ENCODE measurements at regions of chr3 and their contacts with region 1.

Region 1: GRCh38 chr3:179322286-179323196 is at the start of gene ZNF639:
- DNase-seq: peak; percentile 78
- H3K4me3 Mint-ChIP-seq: peak within 1 kb of the TSS; percentile 90
- H3K27ac Mint-ChIP-seq: peak within 1 kb of the TSS; percentile 92
- H3K4me1 Mint-ChIP-seq: peaks cover 32% of the 10 kb centered on the region
- H3K27me3 Mint-ChIP-seq: peaks cover 16% of the 10 kb centered on the region
- total RNA-seq, gene ZNF639: 36.2 and 37.0 TPM in 2 replicates

Region 2: GRCh38 chr3:178436773-178437172 is 885.8 kb before region 1 on chr3:
- intact Hi-C with region 1: loop called (anchors 5 kb)
- DNase-seq: no peak
- H3K4me3 Mint-ChIP-seq: no peak overlapping the region
- H3K27ac Mint-ChIP-seq: no peak overlapping the region
- H3K4me1 Mint-ChIP-seq: no peaks in the 10 kb centered on the region
- H3K27me3 Mint-ChIP-seq: no peaks in the 10 kb centered on the region

Region 3: GRCh38 chr3:179260949-179261765 is 61.4 kb before region 1 on chr3:
- intact Hi-C with region 1: loop called (anchors 5 kb)
- DNase-seq: peak; percentile 66
- H3K4me3 Mint-ChIP-seq: peak overlapping the region; percentile 76
- H3K27ac Mint-ChIP-seq: no peak overlapping the region
- H3K4me1 Mint-ChIP-seq: peaks cover 13% of the 10 kb centered on the region
- H3K27me3 Mint-ChIP-seq: peaks cover 22% of the 10 kb centered on the region

Region 4: DNA sequence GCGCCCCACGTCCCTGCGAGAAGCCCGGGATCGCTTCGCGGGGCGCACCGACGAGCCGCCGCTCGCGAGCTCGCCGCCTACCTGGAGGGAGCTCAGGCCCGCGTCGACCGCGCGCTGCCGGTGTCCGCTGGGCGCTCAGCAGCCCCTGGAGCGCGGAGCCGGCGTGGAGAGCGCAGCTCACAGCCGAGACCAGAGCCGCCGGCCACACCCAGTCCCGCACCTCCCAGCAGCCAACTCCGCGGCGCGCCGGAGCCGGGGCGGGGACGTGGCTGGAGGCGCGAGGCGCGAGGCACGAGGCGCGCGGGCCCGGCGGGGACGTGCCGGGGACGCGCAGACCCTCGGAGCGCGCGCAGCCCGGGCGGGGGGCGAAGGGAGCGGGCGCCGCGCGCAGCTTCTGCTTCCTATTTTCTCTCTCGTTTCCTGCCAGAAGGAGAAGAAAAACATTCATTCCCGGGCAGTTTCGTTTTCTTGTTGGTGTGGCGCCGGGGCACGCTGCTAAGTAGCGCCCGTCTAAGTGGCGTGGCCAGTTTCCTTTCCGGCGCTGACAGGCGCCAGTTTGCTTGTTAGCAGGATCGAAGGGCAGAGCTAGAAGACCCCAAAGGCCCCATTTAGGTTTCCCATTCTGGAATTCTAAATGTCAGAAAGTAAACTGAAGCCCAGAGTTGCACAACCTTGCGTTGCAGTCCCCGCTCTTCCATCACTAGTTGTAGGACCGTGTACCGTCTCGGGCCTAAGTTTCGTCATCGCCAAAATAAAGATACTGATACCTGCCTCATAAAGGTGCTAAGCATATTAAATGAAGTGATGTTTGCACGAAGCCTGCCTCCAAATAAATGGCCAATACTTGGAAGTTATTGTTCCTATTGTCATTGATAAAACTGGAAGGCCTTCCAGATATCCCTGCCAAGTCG is 129.0 kb after region 1 on chr3 and contains the start of gene GNB4:
- intact Hi-C with region 1: loop called (anchors 2 kb)
- DNase-seq: peak; percentile 58
- H3K4me3 Mint-ChIP-seq: peak within 1 kb of the TSS; percentile 89
- H3K27ac Mint-ChIP-seq: peak within 1 kb of the TSS; percentile 91
- H3K4me1 Mint-ChIP-seq: peaks cover 39% of the 10 kb centered on the region
- H3K27me3 Mint-ChIP-seq: peaks cover 51% of the 10 kb centered on the region
- total RNA-seq, gene GNB4: 13.9 and 15.4 TPM in 2 replicates

Region 5: DNA sequence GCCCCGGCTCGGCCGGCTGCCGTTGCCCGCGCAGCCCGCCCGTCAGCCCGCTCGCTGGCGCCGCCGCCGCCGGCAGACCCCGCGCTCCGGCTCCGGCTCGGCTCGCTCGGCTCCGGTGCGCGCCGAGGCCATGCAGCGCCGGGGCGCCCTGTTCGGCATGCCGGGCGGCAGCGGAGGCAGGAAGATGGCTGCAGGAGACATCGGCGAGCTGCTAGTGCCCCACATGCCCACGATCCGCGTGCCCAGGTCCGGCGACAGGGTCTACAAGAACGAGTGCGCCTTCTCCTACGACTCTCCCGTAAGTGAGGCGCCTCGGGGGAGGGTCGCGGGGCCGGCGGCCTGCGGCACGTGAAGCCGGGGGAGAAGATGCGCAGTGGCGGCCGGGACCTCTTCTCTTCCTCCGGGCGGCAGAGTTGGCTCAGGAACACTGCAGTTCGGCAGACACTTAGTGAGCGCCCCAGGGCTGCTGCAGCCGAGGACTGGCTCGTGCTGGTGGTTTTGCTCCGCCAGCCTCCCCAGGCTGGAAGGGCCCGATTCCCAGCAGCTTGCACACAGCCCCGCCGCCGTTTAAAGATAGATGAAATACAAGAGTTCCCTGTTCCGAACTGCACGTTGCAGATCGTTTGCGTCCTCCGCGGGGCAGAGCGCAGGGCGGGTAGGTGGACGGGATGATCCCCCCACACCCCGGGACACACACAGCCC is 330.7 kb after region 1 on chr3:
- intact Hi-C with region 1: loop called (anchors 2 kb)
- DNase-seq: peak; percentile 57
- H3K4me3 Mint-ChIP-seq: peak overlapping the region; percentile 93
- H3K27ac Mint-ChIP-seq: peak overlapping the region; percentile 87
- H3K4me1 Mint-ChIP-seq: peaks cover 27% of the 10 kb centered on the region
- H3K27me3 Mint-ChIP-seq: peaks cover 9% of the 10 kb centered on the region

Measured in activated T-helper 1 cell treated with anti-CD3 and anti-CD28 coated beads, Interleukin-12 subunit alpha, Interleukin-12 subunit beta, Interleukin-2, Interleukin-4 antibody, amounts not matched to agents 30 ng/mL and 10 ng/mL and 1 ng/mL, durations not matched to agents 14 hours and 24 hours and 36 hours (primary cell).